Caco-2 (cell line): ENCODE measurements at regions of chr10 and their contacts with region 1.

Region 1: GRCh38 chr10:82221601-82222150 is 346.7 kb downstream of the NRG3 start:
- DNase-seq: peak; percentile 32 to 38
- H3K4me3 ChIP-seq: no peak overlapping the region
- H3K4me3 Mint-ChIP-seq: no peak overlapping the region
- H3K27ac Mint-ChIP-seq: no peak overlapping the region
- H3K4me1 ChIP-seq: no peaks in the 10 kb centered on the region
- H3K4me1 Mint-ChIP-seq: no peaks in the 10 kb centered on the region
- H3K27me3 ChIP-seq: no peaks in the 10 kb centered on the region
- H3K27me3 Mint-ChIP-seq: no peaks in the 10 kb centered on the region
- CTCF ChIP-seq: peak in 1 of 2 experiments; percentile 48

Region 2: GRCh38 chr10:82377608-82378007 is 155.9 kb after region 1 on chr10:
- CTCF ChIA-PET with region 1: no interaction called
- POLR2A ChIA-PET with region 1: no interaction called
- intact Hi-C with region 1: loop called (anchors 1 kb)
- DNase-seq: peak in 1 of 2 experiments; percentile 13
- H3K4me3 ChIP-seq: no peak overlapping the region
- H3K4me3 Mint-ChIP-seq: no peak overlapping the region
- H3K27ac Mint-ChIP-seq: no peak overlapping the region
- H3K4me1 ChIP-seq: no peaks in the 10 kb centered on the region
- H3K4me1 Mint-ChIP-seq: no peaks in the 10 kb centered on the region
- H3K27me3 ChIP-seq: no peaks in the 10 kb centered on the region
- H3K27me3 Mint-ChIP-seq: no peaks in the 10 kb centered on the region
- CTCF ChIP-seq: peak; percentile 32 to 41